ENCODE measurements at regions of chr1 and their contacts with region 1.

Region 1: DNA sequence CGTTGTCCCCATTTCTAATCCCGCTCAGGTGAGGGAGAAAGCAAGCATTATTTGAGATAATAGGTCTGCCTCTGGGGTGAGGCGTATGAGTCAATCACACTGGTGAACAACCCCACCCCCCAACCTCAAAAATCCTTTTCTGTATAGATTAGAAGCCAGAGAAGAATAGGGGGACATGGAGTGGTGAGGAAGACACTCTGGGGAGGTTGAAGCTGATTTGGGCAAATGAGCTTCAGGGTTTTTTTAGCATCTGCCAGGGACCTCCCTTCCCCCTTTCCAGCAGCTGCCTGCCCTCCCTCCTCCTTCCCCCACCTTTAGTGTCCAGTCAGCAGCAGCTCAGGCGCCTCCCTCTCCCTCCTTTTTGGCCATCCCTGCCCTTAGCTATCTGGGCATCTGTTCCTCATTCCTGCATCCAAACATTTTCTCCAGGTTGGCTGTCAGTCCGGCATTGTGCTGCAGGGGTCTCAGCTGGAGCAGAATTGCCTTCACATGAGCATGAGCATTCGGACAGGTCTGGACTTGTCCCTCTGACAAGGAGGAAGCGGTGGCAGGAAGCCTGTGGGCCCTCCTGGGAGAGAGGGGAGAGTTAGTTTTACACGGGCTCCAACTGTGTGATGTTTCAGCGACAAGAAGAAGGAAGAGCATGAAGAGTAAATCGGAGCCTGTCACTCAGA is 30.8 kb upstream of the PTGFRN start:
- DNase-seq: peak in 3 of 9 experiments; percentile 16 to 22 (median 16)
- ATAC-seq: no peak
- H3K4me3 ChIP-seq: peak overlapping the region in 1 of 2 experiments; percentile 24
- H3K4me3 Mint-ChIP-seq: no peak overlapping the region
- H3K27ac ChIP-seq: no peak overlapping the region
- H3K27ac Mint-ChIP-seq: no peak overlapping the region
- H3K4me1 ChIP-seq: peaks cover 35% of the 10 kb centered on the region
- H3K4me1 Mint-ChIP-seq: peaks cover 13% of the 10 kb centered on the region
- H3K27me3 ChIP-seq: no peaks in the 10 kb centered on the region
- H3K27me3 Mint-ChIP-seq: no peaks in the 10 kb centered on the region
- CTCF ChIP-seq: no peak

Region 2: DNA sequence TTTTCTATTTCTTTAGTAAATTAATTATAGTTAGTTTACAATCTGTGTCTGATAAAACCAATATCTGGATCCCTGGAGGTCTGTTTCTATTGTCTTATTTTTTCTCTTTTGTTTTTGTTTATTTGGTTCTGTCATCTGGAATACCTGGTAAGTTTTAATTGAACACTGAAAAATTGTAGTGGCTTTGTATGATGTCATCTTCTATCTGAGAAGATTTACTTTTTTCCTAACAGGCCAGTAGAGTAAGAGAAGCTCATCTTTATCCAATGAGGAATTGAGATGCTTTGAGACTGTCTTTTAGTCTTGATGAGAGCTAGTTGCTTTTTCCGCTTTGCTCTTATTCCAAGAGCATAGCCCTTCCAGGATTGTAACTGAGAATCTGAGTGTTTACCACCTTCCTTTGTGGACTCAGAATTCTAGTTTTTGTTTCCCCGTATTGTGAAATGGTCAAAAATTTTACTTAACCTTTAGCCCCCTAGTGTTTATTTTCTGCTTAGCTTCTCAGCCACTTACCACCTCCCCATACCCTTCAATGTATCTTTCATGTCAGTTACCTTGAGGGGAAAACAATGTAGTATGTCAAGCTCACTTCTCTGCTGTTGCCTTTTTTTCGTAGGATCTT is 55.8 kb after region 1 on chr1:
- CTCF ChIA-PET with region 1: interaction called, 3 read pairs
- POLR2A ChIA-PET with region 1: interaction called, 4 read pairs
- intact Hi-C with region 1: loop called (anchors 5 kb)
- DNase-seq: peak in 2 of 9 experiments; percentile 43 to 58
- ATAC-seq: peak; percentile 21
- H3K4me3 ChIP-seq: no peak overlapping the region
- H3K4me3 Mint-ChIP-seq: no peak overlapping the region
- H3K27ac ChIP-seq: no peak overlapping the region
- H3K27ac Mint-ChIP-seq: no peak overlapping the region
- H3K4me1 ChIP-seq: peaks cover 22% of the 10 kb centered on the region
- H3K4me1 Mint-ChIP-seq: peaks cover 23% of the 10 kb centered on the region
- H3K27me3 ChIP-seq: no peaks in the 10 kb centered on the region
- H3K27me3 Mint-ChIP-seq: no peaks in the 10 kb centered on the region
- CTCF ChIP-seq: peak; percentile 32

Region 3: DNA sequence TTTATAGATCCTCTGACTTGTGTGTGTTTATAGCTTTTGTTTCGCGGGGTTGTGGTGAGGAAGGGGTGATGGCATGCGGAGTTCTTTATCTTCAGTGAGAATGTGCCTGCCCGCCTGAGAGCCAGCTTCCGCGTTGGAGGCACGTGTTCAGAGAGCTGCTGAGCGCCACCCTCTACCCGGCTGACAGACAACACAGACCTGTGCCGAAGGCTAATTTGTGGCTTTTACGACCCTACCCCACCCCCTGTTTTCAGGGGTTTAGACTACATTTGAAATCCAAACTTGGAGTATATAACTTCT is 108.3 kb after region 1 on chr1:
- CTCF ChIA-PET with region 1: no interaction called
- POLR2A ChIA-PET with region 1: no interaction called
- intact Hi-C with region 1: loop called in 1 of 2 experiments (anchors 2 kb)
- DNase-seq: peak; percentile 43 to 83 (median 74)
- ATAC-seq: peak; percentile 91
- H3K4me3 ChIP-seq: peak overlapping the region; percentile 29 to 53
- H3K4me3 Mint-ChIP-seq: peak overlapping the region; percentile 85
- H3K27ac ChIP-seq: peak overlapping the region; percentile 49 to 85
- H3K27ac Mint-ChIP-seq: peak overlapping the region; percentile 98
- H3K4me1 ChIP-seq: peaks cover 52% of the 10 kb centered on the region
- H3K4me1 Mint-ChIP-seq: peaks cover 69% of the 10 kb centered on the region
- H3K27me3 ChIP-seq: no peaks in the 10 kb centered on the region
- H3K27me3 Mint-ChIP-seq: no peaks in the 10 kb centered on the region
- CTCF ChIP-seq: no peak